ENCODE measurements at regions of chr9 and their contacts with region 1.

Region 1: DNA sequence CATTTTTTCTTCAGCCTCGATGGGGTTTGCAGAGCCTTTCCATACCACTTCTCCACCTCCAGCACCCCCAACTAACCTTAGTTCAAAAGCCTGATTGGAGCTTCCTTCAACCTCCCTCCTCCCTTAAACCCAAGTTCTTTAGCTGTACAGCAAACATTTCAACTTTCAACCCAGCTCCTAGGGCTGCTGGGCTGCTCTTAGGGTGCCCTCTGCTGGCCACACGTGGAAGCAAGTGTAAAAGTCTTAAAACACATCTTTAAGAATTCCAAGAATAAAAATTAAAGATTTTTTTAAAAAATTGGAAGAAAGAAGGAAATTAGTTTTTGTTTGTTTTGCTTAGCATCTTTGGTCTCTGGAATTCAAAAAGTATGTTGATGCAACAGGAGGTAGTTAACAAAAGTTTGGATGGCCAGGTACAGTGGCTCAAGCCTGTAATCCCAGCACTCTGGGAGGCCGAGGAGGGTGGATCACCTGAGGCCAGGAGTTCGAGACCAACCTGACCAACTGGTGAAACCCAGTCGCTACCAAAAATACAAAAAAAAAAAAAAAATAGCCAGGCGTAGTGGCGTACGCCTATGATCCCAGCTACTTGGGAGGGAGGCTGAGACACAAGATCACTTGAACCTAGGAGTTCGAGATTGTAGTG is 15.5 kb upstream of the HSD17B3 start:
- DNase-seq: peak; percentile 46
- H3K4me3 ChIP-seq: no peak overlapping the region
- H3K27ac ChIP-seq: no peak overlapping the region
- H3K4me1 ChIP-seq: no peaks in the 10 kb centered on the region
- H3K27me3 ChIP-seq: no peaks in the 10 kb centered on the region
- CTCF ChIP-seq: peak; percentile 71 to 91 (median 85)
- EP300 ChIP-seq: no peak
- POLR2A ChIP-seq: no peak

Region 2: DNA sequence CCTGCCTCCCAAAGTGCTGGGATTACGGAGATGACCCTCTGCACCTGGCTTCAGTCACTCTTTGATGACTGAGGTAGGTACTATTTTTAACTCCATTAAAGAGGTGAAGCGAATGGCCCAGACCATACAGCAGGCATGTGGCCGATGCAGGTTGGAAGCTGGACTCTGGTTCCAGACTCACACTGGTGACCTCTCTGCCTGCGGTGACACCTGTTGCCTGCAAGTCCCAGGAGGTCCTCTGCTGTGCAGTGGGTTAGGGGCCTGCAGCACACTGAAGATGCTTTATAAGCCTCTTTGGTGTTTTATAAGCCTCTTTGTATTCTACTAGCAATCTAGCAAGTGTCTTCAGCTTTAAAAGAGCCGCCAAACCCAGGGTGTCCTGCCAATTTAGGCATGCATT is 751.5 kb before region 1 on chr9:
- in situ Hi-C with region 1: no loop called
- intact Hi-C with region 1: no loop called
- DNase-seq: no peak
- H3K4me3 ChIP-seq: no peak overlapping the region
- H3K27ac ChIP-seq: no peak overlapping the region
- H3K4me1 ChIP-seq: no peaks in the 10 kb centered on the region
- H3K27me3 ChIP-seq: peaks cover 3% of the 10 kb centered on the region
- CTCF ChIP-seq: no peak
- EP300 ChIP-seq: no peak
- POLR2A ChIP-seq: no peak

Region 3: DNA sequence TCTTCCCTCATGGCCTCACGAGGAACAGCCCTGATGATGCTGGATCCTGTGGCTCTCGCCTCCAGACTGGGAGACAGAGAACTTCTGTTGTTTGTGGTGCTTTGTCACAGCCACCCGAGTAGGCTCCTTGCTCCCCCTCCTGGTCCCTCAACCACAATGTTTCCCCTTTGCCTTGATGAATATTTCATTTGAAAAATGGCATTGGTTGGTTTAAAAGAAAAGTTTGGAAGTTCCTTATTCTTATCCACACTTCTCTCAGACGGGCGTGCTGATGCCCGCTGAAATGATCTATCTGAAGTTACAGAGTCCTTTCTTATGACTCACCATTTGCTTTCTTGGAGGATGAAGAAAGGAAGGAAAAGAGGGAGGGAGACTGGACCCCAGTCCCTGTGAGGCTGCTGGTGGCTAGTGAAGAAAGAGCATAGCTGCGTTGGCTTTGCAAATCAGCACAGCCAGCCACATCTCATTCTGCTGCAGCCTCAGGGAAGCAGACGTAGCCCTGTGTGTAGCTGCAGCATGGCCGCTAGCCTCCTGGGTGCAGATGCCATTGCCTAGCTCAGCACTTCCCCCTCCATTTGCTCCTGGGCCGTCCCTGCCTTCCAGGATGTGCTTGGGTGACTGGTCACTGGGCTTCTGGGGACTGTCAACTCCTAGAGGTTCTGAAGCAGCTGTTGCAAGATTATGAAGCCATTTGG is 256.0 kb before region 1 on chr9:
- in situ Hi-C with region 1: no loop called
- intact Hi-C with region 1: no loop called
- DNase-seq: no peak
- H3K4me3 ChIP-seq: no peak overlapping the region
- H3K27ac ChIP-seq: peak overlapping the region; percentile 31 to 42 (median 38)
- H3K4me1 ChIP-seq: peaks cover 0 to 7% (median 0%) of the 10 kb centered on the region in 4 donors
- H3K27me3 ChIP-seq: no peaks in the 10 kb centered on the region
- CTCF ChIP-seq: peak; percentile 24 to 37 (median 36)
- EP300 ChIP-seq: no peak
- POLR2A ChIP-seq: no peak

Region 4: GRCh38 chr9:96232539-96233241 is 84.8 kb before region 1 on chr9:
- in situ Hi-C with region 1: loop called in 1 of 4 experiments (anchors 10 kb)
- intact Hi-C with region 1: no loop called
- DNase-seq: peak; percentile 35
- H3K4me3 ChIP-seq: no peak overlapping the region
- H3K27ac ChIP-seq: peak overlapping the region; percentile 62 to 71 (median 67)
- H3K4me1 ChIP-seq: peaks cover 0 to 8% (median 2%) of the 10 kb centered on the region in 4 donors
- H3K27me3 ChIP-seq: no peaks in the 10 kb centered on the region
- CTCF ChIP-seq: peak; percentile 66 to 85 (median 79)
- EP300 ChIP-seq: no peak
- POLR2A ChIP-seq: no peak

Region 5: GRCh38 chr9:96344458-96345180 is 27.2 kb after region 1 on chr9:
- in situ Hi-C with region 1: no loop called
- intact Hi-C with region 1: no loop called
- DNase-seq: peak; percentile 48
- H3K4me3 ChIP-seq: no peak overlapping the region
- H3K27ac ChIP-seq: peak overlapping the region; percentile 27 to 72 (median 62)
- H3K4me1 ChIP-seq: peaks cover 0 to 22% (median 16%) of the 10 kb centered on the region in 4 donors
- H3K27me3 ChIP-seq: no peaks in the 10 kb centered on the region
- CTCF ChIP-seq: no peak
- EP300 ChIP-seq: no peak
- POLR2A ChIP-seq: no peak